AG04450 (cell line): ENCODE measurements at regions of chr2 and their contacts with region 1.

Region 1: DNA sequence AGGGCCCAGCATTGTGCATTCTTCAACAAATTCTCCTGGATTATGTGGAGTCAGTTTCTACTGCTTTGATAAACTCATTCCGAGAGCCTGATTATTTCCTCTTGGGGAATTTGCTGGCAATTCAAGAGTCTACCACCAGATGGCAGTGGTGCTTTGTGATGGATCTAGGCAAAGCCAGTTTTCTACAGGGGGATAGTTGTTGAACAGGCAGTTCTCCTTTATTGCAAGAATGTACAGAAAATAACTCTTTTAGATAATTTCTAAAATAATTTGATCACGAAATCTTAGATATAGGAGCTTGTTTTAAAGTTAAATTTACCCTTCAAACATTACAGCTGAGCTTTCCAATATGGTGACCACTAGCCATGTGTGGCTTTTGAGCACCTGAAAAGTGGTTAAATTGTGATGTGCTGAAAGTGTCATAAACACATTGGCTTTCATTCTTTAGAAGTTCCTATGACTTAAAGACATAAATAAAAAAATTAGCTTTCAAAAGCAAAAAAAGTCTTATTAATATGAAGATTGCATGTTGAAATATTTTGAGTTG is 66.7 kb upstream of the HAAO start:
- DNase-seq: peak; percentile 68
- H3K4me3 ChIP-seq: no peak overlapping the region
- H3K27ac ChIP-seq: no peak overlapping the region
- H3K27me3 ChIP-seq: peaks cover under 1% of the 10 kb centered on the region
- CTCF ChIP-seq: peak; percentile 95

Region 2: DNA sequence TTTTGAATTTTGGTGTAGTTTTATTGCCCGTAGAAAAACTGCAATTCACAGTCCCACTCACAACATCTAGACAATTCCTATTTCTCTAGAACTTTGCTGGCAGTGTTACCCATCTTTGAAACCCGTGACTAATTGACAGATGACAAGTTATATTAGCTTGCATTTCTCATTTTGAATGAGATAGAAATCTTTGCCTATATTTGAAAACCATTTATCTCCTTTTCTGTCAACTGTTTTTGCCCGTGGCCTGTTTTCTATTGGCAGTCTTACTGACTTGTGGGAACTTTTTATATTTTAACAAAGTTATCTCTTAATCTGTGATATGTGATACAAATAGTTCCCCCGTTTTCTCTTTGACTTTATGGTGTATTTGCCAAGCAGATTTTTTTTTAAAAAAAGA is 145.1 kb before region 1 on chr2:
- CTCF ChIA-PET with region 1: no interaction called
- POLR2A ChIA-PET with region 1: no interaction called
- DNase-seq: no peak
- H3K4me3 ChIP-seq: no peak overlapping the region
- H3K27ac ChIP-seq: no peak overlapping the region
- H3K27me3 ChIP-seq: no peaks in the 10 kb centered on the region
- CTCF ChIP-seq: no peak

Region 3: DNA sequence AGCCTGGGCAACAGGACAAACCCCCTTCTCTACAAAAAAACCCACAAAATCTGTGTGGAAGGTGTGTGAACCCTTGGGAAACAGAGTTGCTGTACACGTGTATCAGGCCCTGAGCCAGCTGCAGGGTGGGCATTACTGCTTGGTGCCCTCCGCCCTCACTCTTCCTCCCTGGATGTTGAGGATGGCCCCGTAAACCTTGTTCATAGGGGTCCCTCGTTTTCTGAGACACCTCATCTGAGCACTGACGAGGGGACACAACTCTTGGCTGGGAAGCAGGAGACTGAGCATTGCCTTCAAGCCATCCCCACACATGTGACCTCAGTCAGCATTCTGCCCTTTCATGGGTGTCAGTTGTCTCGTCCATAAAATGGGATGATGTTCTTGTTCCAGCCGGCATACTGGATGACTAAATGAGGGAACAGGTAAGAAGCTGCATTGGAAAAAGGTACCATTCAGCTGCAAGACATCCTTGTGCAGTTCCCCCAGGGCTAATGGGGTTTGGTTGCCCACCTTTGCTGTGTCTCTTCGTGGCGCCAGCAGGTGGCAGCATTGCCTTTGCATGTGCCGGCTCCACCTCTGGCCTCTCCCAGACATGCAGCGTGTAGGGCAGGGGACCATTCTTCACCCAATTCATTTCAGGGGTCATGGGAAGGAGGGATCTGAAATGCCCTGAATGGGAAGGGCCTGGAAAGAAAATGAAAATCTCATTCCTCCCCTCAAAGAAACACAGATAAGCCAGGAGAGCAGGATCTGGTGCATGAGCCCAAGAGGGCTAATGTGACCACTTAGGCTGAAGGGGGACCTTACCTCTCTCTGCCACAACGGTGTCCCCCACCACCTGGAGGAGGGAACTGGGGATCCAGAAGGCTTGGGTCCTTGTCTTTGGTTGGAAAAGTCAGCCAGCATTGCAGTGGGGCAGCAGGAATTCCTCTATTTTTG is 30.3 kb before region 1 on chr2:
- CTCF ChIA-PET with region 1: interaction called, 19 read pairs
- POLR2A ChIA-PET with region 1: no interaction called
- DNase-seq: no peak
- H3K4me3 ChIP-seq: no peak overlapping the region
- H3K27ac ChIP-seq: no peak overlapping the region
- H3K27me3 ChIP-seq: no peaks in the 10 kb centered on the region
- CTCF ChIP-seq: peak; percentile 87

Region 4: GRCh38 chr2:42928692-42929545 is 69.8 kb after region 1 on chr2:
- CTCF ChIA-PET with region 1: interaction called, 16 read pairs
- POLR2A ChIA-PET with region 1: no interaction called
- DNase-seq: no peak
- H3K4me3 ChIP-seq: no peak overlapping the region
- H3K27ac ChIP-seq: peak overlapping the region; percentile 80
- H3K27me3 ChIP-seq: no peaks in the 10 kb centered on the region
- CTCF ChIP-seq: peak; percentile 58

Region 5: DNA sequence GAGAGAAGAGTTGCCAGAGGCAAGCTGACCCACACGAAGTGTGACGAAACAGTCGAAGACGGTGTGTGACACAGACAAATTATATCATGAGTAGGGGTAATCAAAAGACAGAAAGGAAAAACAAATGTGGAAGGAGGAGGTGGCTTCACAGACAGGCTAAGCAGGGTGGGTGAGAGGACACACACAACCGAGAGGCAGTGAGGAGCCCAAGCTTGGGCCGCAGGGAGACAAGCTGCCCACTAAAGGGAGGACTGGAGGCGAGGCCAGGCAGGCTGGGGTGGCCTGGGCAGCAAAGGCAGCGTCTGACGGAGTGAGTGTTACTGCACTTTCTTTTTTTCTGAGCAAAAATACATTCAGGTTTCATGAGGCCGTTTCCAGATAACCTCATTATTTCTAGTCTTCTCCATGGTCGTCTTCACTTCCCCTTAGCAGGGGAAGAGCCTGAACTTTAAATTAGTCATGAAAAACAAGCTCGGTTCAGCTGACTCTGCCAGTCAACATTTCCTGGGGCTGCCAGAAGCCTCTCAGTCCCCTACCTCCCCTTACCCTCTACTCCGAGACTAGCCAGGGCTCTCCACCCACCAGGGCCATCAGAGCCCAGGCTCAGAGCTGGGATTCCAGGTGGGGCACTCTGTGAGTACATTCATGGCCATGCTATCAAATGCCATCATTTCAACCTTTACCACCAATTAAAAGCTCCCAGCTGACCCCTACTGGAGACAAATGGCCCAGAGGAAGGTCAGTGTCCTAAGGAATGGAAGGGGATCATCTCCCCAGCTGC is 381.1 kb after region 1 on chr2:
- CTCF ChIA-PET with region 1: interaction called, 11 read pairs
- POLR2A ChIA-PET with region 1: no interaction called
- DNase-seq: no peak
- H3K4me3 ChIP-seq: no peak overlapping the region
- H3K27ac ChIP-seq: no peak overlapping the region
- H3K27me3 ChIP-seq: no peaks in the 10 kb centered on the region
- CTCF ChIP-seq: peak; percentile 18

Region 6: GRCh38 chr2:43576981-43577892 is 718.2 kb after region 1 on chr2:
- CTCF ChIA-PET with region 1: interaction called, 11 read pairs
- POLR2A ChIA-PET with region 1: no interaction called
- DNase-seq: peak; percentile 32
- H3K4me3 ChIP-seq: no peak overlapping the region
- H3K27ac ChIP-seq: no peak overlapping the region
- H3K27me3 ChIP-seq: no peaks in the 10 kb centered on the region
- CTCF ChIP-seq: peak; percentile 84